ENCODE measurements at regions of chr11 and their contacts with region 1.

Region 1: GRCh38 chr11:118295834-118296454 is 8.6 kb upstream of the CD3E start:
- DNase-seq: no peak
- H3K4me3 ChIP-seq: no peak overlapping the region
- H3K27ac ChIP-seq: no peak overlapping the region
- H3K4me1 ChIP-seq: peaks cover 0 to 15% (median 4%) of the 10 kb centered on the region in 6 donors
- H3K27me3 ChIP-seq: peaks cover 0 to 11% (median 0%) of the 10 kb centered on the region in 7 donors
- CTCF ChIP-seq: peak in 9 of 11 experiments; percentile 22 to 68 (median 54)
- POLR2A ChIP-seq: no peak

Region 2: DNA sequence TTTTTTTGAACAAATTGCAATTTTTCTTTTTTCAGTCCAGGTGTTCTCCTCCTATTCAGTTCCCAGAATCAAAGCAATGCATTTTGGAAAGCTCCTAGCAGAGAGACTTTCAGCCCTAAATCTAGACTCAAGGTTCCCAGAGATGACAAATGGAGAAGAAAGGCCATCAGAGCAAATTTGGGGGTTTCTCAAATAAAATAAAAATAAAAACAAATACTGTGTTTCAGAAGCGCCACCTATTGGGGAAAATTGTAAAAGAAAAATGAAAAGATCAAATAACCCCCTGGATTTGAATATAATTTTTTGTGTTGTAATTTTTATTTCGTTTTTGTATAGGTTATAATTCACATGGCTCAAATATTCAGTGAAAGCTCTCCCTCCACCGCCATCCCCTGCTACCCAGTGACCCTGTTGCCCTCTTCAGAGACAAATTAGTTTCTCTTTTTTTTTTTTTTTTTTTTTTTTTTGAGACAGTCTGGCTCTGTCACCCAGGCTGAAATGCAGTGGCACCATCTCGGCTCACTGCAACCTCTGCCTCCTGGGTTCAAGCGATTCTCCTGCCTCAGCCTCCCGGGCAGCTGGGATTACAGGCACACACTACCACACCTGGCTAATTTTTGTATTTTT is 57.3 kb after region 1 on chr11:
- intact Hi-C with region 1: loop called (anchors 5 kb)
- DNase-seq: no peak
- H3K4me3 ChIP-seq: no peak overlapping the region
- H3K27ac ChIP-seq: no peak overlapping the region
- H3K4me1 ChIP-seq: peaks cover 0 to 10% (median 0%) of the 10 kb centered on the region in 6 donors
- H3K27me3 ChIP-seq: no peaks in the 10 kb centered on the region
- CTCF ChIP-seq: peak; percentile 11 to 65 (median 47)
- POLR2A ChIP-seq: no peak

Region 3: DNA sequence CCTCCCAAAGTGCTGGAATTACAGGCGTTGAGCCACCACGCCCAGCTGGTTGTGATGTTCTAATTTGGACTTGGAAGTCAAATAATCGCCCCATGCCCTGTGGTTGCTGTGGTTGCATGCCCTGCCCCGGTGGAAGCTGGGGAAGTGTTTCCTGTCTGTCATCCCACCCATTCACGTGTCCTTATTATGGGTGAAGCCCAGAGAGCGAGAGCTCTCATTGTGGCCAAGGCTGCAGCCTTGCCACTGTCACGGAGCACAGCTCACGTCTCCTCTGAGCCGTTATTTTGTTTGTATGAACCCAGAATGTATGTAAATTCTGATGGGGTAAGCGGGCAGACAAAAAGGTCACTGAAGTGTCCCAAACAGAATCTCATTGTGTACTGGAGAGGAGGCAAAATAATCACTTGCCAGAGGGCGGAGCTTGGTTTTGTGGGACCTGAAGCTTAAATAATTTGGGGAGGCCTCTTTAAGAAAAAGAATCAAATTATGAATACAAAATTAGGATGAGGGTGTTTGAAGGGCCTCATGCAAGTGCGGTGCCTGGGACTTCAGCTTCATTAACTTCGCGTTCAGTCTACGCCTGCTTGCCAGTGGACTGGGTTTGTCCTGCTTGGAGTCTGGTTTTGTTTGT is 409.3 kb after region 1 on chr11:
- intact Hi-C with region 1: no loop called
- DNase-seq: no peak
- H3K4me3 ChIP-seq: no peak overlapping the region
- H3K27ac ChIP-seq: peak overlapping the region in 5 of 8 donors; percentile 3 to 51 (median 43)
- H3K4me1 ChIP-seq: peaks cover 7 to 37% (median 12%) of the 10 kb centered on the region in 6 donors
- H3K27me3 ChIP-seq: peaks cover 0 to 5% (median 0%) of the 10 kb centered on the region in 7 donors
- CTCF ChIP-seq: no peak
- POLR2A ChIP-seq: no peak

Region 4: DNA sequence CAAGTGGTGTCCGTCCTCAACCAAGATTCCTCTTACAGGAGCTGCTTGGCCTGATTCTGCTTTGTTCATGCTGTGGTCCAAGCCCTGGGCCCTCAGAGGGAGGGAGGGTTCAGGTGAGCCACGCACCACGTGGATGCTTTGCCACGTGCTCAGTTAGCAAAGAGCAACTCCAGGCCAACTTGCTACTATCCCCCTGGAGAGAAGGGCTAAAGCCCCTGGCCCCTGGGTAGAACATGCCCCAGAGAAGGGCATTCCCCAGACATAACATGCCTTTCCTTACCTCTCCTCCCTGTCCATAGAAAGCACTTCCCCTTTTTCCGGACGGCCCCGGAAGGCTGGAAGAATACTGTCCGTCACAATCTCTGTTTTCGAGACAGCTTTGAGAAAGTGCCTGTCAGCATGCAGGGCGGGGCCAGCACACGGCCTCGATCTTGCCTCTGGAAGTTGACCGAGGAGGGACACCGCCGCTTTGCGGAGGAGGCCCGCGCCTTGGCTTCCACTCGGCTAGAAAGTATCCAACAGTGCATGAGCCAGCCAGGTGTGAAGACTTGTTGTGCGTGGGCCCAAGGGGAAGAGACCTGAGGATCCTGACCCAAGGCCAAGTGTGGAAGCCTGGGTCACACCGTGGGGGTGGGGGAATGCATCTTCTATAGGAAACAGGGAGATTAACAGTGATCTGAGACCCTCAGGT is 684.4 kb after region 1 on chr11:
- intact Hi-C with region 1: no loop called
- DNase-seq: peak; percentile 43
- H3K4me3 ChIP-seq: peak overlapping the region in 3 of 8 donors; percentile 6 to 41 (median 19)
- H3K27ac ChIP-seq: no peak overlapping the region
- H3K4me1 ChIP-seq: peaks cover 0 to 16% (median 4%) of the 10 kb centered on the region in 6 donors
- H3K27me3 ChIP-seq: peaks cover 0 to 17% (median 0%) of the 10 kb centered on the region in 7 donors
- CTCF ChIP-seq: no peak
- POLR2A ChIP-seq: no peak